Spleen (tissue), 13 donors: ENCODE measurements at regions of chr17 and their contacts with region 1.

Region 1: GRCh38 chr17:78879635-78880186 is 23.3 kb downstream of the CEP295NL start:
- DNase-seq: peak; percentile 87
- H3K4me3 ChIP-seq: peak overlapping the region in 3 of 8 donors; percentile 9 to 48 (median 23)
- H3K27ac ChIP-seq: peak overlapping the region; percentile 77 to 97 (median 93)
- H3K4me1 ChIP-seq: peaks cover 55 to 99% (median 79%) of the 10 kb centered on the region in 6 donors
- H3K27me3 ChIP-seq: peaks cover 0 to 23% (median 0%) of the 10 kb centered on the region in 7 donors
- CTCF ChIP-seq: peak in 5 of 11 experiments; percentile 17 to 29 (median 21)
- POLR2A ChIP-seq: no peak

Region 2: GRCh38 chr17:78458736-78459331 is 420.9 kb before region 1 on chr17:
- intact Hi-C with region 1: no loop called
- DNase-seq: no peak
- H3K4me3 ChIP-seq: no peak overlapping the region
- H3K27ac ChIP-seq: no peak overlapping the region
- H3K4me1 ChIP-seq: no peaks in the 10 kb centered on the region
- H3K27me3 ChIP-seq: no peaks in the 10 kb centered on the region
- CTCF ChIP-seq: no peak
- POLR2A ChIP-seq: no peak

Region 3: GRCh38 chr17:78925234-78925633 is 45.5 kb after region 1 on chr17 and contains the start of gene TIMP2:
- intact Hi-C with region 1: loop called (anchors 10 kb)
- DNase-seq: peak; percentile 96
- H3K4me3 ChIP-seq: peak within 1 kb of the TSS; percentile 56 to 86 (median 70)
- H3K27ac ChIP-seq: peak within 1 kb of the TSS; percentile 87 to 97 (median 95)
- H3K4me1 ChIP-seq: peaks cover 19 to 69% (median 51%) of the 10 kb centered on the region in 6 donors
- H3K27me3 ChIP-seq: peaks cover 0 to 27% (median 3%) of the 10 kb centered on the region in 7 donors
- CTCF ChIP-seq: peak in 9 of 11 experiments; percentile 11 to 77 (median 60)
- POLR2A ChIP-seq: peak in 1 of 3 donors; percentile 89
- total RNA-seq, gene TIMP2: 164 to 333 (median 198) TPM